Colonic mucosa (tissue), 4 donors: ENCODE measurements at regions of chr1 and their contacts with region 1.

Region 1: GRCh38 chr1:35016406-35016805 is 15.3 kb downstream of the ZMYM6 start:
- DNase-seq: no peak
- H3K4me3 ChIP-seq: no peak overlapping the region
- H3K27ac ChIP-seq: no peak overlapping the region
- H3K4me1 ChIP-seq: no peaks in the 10 kb centered on the region
- H3K27me3 ChIP-seq: no peaks in the 10 kb centered on the region
- CTCF ChIP-seq: no peak

Region 2: GRCh38 chr1:35180776-35181374 is 164.5 kb after region 1 on chr1:
- intact Hi-C with region 1: loop called (anchors 10 kb)
- DNase-seq: no peak
- H3K4me3 ChIP-seq: no peak overlapping the region
- H3K27ac ChIP-seq: no peak overlapping the region
- H3K4me1 ChIP-seq: no peaks in the 10 kb centered on the region
- H3K27me3 ChIP-seq: no peaks in the 10 kb centered on the region
- CTCF ChIP-seq: no peak